Gastrocnemius medialis (tissue), 4 donors: ENCODE measurements at regions of chr1 and their contacts with region 1.

Region 1: GRCh38 chr1:14259191-14259757 is 339.2 kb upstream of the KAZN start:
- DNase-seq: peak; percentile 69 to 86
- ATAC-seq: peak; percentile 85 to 89
- H3K4me3 ChIP-seq: no peak overlapping the region
- H3K27ac ChIP-seq: peak overlapping the region in 2 of 4 donors; percentile 33 to 37
- H3K4me1 ChIP-seq: no peaks in the 10 kb centered on the region
- H3K27me3 ChIP-seq: no peaks in the 10 kb centered on the region
- CTCF ChIP-seq: no peak
- POLR2A ChIP-seq: no peak

Region 2: DNA sequence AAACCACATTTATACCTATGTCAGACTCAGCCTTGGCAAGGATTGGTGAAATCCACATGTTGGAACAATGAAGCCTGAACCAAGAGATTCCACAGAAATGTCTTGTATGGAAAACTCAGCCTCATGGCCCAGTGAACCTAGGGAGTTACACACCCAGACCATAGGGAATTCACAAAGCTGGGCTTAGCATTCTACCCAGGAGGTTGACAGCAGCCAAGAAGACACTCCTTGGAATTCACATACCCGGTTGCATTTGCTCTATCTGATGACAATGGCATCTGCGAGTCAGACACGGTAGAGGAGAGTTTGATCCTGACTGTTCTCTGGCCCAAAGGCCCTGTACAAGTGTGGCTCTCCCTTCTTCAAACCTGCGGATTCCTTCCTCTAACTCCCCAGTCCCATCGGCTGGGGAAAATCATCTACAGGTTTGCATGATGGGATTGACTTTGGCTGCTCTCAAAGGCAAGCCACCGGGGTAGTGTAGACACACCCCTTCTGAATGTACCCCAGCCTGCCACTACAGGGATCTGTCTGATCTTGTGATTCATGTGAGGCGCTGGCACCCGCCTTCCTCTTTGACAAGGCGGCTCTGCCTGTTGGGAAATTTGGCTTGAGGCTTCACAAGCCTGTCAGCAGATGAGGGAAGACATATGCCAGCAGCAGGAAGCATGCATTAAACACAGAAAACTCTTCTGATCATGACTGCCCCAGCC is 41.9 kb after region 1 on chr1:
- in situ Hi-C with region 1: no loop called
- intact Hi-C with region 1: loop called (anchors 10 kb)
- DNase-seq: peak in 1 of 2 donors; percentile 28
- ATAC-seq: no peak
- H3K4me3 ChIP-seq: no peak overlapping the region
- H3K27ac ChIP-seq: no peak overlapping the region
- H3K4me1 ChIP-seq: no peaks in the 10 kb centered on the region
- H3K27me3 ChIP-seq: no peaks in the 10 kb centered on the region
- CTCF ChIP-seq: no peak
- POLR2A ChIP-seq: no peak